Mammary epithelial cell (primary cell): ENCODE measurements at regions of chr14 and their contacts with region 1.

Region 1: DNA sequence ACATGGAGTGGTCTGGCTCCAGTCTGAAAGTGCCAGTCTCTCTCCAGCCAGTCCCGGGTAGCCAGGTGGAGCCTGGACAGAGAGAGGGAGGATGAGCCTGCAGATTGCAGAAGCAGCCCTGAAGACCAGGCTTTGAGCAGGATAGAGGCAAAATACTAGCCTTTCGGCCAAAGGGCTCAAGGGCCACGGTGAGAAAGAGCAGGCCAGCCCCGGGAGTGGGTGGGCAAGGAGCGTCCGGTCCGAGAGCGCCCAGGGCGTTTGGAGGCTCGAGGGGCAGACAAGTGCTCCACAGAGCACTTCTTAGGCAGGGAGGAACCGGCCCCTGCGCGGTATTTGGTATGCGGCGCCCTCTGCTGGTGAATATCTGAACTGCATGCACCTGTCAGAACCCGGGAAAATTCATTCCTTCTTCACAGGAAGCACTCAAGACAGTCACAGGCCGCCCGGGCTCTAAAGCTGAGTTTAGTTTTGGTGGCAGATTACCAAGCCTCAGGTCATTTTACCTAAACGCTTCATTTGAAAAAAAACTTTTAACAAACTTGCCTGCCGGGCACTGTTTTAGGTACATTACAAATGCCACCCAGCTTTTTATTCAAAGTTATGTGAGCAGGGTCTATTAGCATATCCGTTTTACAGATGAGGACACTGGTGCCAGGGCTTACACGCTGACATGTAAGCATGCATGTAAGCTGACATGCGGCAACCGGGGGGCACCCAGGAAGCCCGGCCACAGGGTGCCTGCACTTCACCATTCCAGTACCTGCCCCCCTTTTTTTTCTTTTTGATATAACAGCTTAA is 21.0 kb upstream of the PSMC1 start:
- DNase-seq: peak; percentile 37
- H3K4me3 ChIP-seq: no peak overlapping the region
- H3K27ac ChIP-seq: no peak overlapping the region
- H3K4me1 ChIP-seq: peaks cover 4% of the 10 kb centered on the region
- H3K27me3 ChIP-seq: no peaks in the 10 kb centered on the region
- CTCF ChIP-seq: peak; percentile 83 to 92

Region 2: GRCh38 chr14:89936658-89937185 is 298.7 kb before region 1 on chr14:
- CTCF ChIA-PET with region 1: interaction called, 12 read pairs
- dilution Hi-C with region 1: no loop called
- in situ Hi-C with region 1: no loop called
- intact Hi-C with region 1: loop called (anchors 1 kb)
- DNase-seq: no peak
- H3K4me3 ChIP-seq: no peak overlapping the region
- H3K27ac ChIP-seq: no peak overlapping the region
- H3K4me1 ChIP-seq: no peaks in the 10 kb centered on the region
- H3K27me3 ChIP-seq: no peaks in the 10 kb centered on the region
- CTCF ChIP-seq: peak in 1 of 2 donors; percentile 5

Region 3: DNA sequence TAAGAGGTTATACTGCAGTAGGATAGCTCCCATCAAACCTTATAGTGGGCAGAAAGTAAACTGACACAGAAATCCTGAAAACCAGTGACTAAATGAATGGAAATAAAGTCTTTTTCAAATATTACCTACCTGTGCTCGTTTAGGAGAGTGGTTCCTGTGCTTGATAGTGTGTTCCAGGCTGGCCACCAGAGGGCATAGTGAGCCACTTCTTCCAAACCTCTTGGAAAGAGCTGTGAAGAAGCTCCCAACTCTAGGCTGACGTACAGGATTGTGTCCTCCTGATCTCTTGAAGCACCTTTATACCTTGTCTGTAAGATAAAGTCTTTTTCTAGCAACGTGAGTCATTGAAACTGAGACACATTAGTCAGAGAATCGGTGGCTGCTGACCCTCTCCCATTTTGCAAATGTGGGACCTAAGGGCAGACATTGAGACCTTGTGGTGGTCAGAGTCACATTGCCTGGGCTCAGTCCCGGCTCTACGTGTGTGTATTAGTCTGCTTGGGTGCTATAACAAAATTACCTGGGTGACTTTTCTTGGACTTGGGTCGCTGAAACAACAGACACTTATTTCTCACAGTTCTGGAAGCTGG is 262.0 kb before region 1 on chr14:
- CTCF ChIA-PET with region 1: interaction called, 3 read pairs
- dilution Hi-C with region 1: loop called (anchors 25 kb)
- in situ Hi-C with region 1: loop called (anchors 10 kb)
- intact Hi-C with region 1: loop called (anchors 1 kb)
- DNase-seq: peak; percentile 40
- H3K4me3 ChIP-seq: no peak overlapping the region
- H3K27ac ChIP-seq: no peak overlapping the region
- H3K4me1 ChIP-seq: no peaks in the 10 kb centered on the region
- H3K27me3 ChIP-seq: no peaks in the 10 kb centered on the region
- CTCF ChIP-seq: peak; percentile 86 to 89

Region 4: DNA sequence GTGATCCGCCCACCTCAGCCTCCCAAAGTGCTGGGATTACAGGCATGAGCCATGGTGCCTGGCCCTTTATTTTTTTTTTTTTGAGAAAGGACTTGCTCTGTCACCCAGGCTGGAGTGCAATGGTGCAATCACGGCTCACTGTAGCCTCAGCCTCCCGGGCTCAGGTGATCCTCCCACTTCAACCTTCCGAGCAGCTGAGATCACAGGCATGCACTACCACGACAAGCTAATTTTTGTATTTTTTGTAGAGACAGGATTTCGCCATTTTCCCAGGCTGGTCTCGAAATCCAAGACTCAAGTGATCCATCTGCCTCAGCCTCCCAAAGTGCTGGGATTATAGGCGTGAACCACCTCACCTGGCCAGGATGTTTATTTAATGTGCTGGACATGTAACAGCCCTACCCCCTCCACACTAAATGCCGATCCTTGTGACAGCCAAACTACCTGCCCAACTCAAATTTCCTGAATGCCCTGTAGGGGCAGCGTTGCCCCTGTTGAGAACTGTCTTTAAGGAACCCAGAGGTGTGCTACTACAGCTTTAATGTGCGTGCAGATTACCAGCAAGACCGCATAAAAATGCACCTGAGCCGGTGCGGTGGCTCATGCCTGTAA is 125.6 kb before region 1 on chr14:
- CTCF ChIA-PET with region 1: interaction called, 4 read pairs
- dilution Hi-C with region 1: no loop called
- in situ Hi-C with region 1: no loop called
- intact Hi-C with region 1: loop called (anchors 5 kb)
- DNase-seq: no peak
- H3K4me3 ChIP-seq: no peak overlapping the region
- H3K27ac ChIP-seq: no peak overlapping the region
- H3K4me1 ChIP-seq: peaks cover 5% of the 10 kb centered on the region
- H3K27me3 ChIP-seq: no peaks in the 10 kb centered on the region
- CTCF ChIP-seq: peak; percentile 39 to 43

Region 5: DNA sequence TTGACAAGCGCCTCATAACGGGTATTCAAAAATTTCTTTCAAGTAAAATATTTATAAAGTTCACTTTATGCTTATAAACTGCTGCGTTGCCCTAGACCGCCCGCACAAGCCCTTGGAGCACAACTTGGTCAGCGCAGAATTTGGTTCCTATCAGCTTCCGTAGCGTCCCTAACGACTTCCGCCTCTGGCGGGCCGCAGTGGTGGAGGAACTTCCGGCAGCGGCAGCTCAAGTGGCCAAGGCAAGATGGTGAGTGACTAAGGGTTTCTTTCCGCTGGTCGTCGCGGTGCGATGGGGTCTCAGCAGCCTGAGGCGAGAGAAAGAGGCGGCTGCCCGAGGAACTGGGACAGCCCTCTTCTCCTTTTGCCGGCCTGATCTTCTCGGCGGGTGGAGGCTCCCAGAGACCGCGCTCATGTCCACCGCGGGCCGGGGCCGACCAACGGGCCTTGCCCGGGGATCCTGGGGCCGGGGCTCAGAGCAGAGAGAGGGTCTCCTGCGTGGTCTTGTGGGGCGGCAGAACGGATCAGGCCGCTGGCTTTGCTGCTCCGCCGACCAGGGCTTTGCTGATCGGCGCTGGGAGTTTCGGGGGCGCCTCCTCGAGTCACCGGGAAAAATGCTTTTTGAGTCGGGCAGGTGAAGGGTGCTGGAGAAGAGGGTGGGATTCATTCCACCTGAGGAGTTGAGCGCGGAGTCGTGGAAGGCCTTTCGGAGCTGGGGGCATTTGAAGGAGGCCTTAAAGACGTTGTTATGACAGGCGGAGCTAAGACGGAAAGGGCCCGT is 21.2 kb after region 1 on chr14 and contains the start of gene PSMC1:
- CTCF ChIA-PET with region 1: no interaction called
- dilution Hi-C with region 1: no loop called
- in situ Hi-C with region 1: no loop called
- intact Hi-C with region 1: no loop called
- DNase-seq: peak; percentile 87
- H3K4me3 ChIP-seq: peak within 1 kb of the TSS; percentile 86 to 99 (median 98)
- H3K27ac ChIP-seq: peak within 1 kb of the TSS; percentile 92
- H3K4me1 ChIP-seq: peaks cover 7% of the 10 kb centered on the region
- H3K27me3 ChIP-seq: no peaks in the 10 kb centered on the region
- CTCF ChIP-seq: no peak
- total RNA-seq, gene PSMC1: 82.4 to 112 TPM

Region 6: GRCh38 chr14:90697577-90698206 is 462.3 kb after region 1 on chr14:
- CTCF ChIA-PET with region 1: no interaction called
- dilution Hi-C with region 1: no loop called
- in situ Hi-C with region 1: no loop called
- intact Hi-C with region 1: loop called (anchors 5 kb)
- DNase-seq: peak; percentile 62
- H3K4me3 ChIP-seq: no peak overlapping the region
- H3K27ac ChIP-seq: no peak overlapping the region
- H3K4me1 ChIP-seq: no peaks in the 10 kb centered on the region
- H3K27me3 ChIP-seq: no peaks in the 10 kb centered on the region
- CTCF ChIP-seq: peak; percentile 94 to 95

Region 7: GRCh38 chr14:90805662-90806540 is 570.5 kb after region 1 on chr14:
- CTCF ChIA-PET with region 1: no interaction called
- dilution Hi-C with region 1: no loop called
- in situ Hi-C with region 1: no loop called
- intact Hi-C with region 1: no loop called
- DNase-seq: no peak
- H3K4me3 ChIP-seq: no peak overlapping the region
- H3K27ac ChIP-seq: no peak overlapping the region
- H3K4me1 ChIP-seq: no peaks in the 10 kb centered on the region
- H3K27me3 ChIP-seq: no peaks in the 10 kb centered on the region
- CTCF ChIP-seq: no peak